ENCODE measurements at regions of chr12 and their contacts with region 1.

Region 1: DNA sequence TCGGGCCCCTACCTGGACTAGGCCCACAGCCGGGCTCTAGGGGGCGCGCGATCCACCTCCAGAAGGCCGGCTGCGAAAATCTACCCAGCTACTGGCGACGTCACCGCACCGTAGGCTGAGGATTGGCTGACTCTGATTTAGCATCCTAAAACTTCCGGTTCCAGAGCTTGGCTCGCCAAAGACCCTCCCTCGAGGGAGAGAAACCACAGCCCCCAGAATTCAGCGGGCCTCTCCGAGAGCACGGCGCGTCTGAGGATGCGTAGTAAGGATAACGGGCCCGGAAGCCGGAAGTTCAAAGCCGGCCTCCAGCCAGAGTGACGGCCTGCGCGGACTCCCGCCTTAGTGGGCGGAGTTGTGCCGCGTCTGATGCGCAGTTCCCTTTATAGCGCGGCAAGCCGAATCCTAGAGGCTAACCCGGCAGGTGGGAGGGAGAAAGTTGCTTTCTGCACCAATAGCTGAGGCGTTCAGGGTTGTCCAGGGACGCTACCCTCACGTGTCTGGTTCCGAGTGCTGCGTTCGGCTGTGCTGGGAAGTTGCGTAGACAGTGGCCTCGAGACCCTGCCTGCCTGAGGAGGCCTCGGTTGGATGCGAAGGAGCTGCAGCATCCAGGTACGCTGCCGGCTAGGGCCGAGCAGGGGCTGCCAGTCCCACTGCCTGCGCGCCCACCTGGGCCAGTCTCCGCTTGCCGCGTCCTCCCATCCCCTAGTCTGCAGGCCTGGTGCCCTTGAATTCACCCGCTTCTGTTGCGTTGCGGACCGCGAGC is at the start of gene COX14:
- DNase-seq: peak; percentile 100
- H3K4me3 Mint-ChIP-seq: peak within 1 kb of the TSS; percentile 95
- H3K27ac Mint-ChIP-seq: peak within 1 kb of the TSS; percentile 96
- H3K4me1 Mint-ChIP-seq: peaks cover 32% of the 10 kb centered on the region
- H3K27me3 Mint-ChIP-seq: no peaks in the 10 kb centered on the region
- total RNA-seq, gene COX14: 44.0 and 45.0 TPM in 2 replicates

Region 2: GRCh38 chr12:50025187-50026059 is 86.5 kb before region 1 on chr12 and contains the start of gene RACGAP1:
- intact Hi-C with region 1: loop called (anchors 1 kb)
- DNase-seq: peak; percentile 99
- H3K4me3 Mint-ChIP-seq: peak within 1 kb of the TSS; percentile 93
- H3K27ac Mint-ChIP-seq: peak within 1 kb of the TSS; percentile 96
- H3K4me1 Mint-ChIP-seq: peaks cover 37% of the 10 kb centered on the region
- H3K27me3 Mint-ChIP-seq: no peaks in the 10 kb centered on the region
- total RNA-seq, gene RACGAP1: 71.2 and 71.6 TPM in 2 replicates

Region 3: GRCh38 chr12:50084775-50085614 is 26.9 kb before region 1 on chr12 and contains the start of gene SMARCD1:
- intact Hi-C with region 1: loop called (anchors 1 kb)
- DNase-seq: peak; percentile 94
- H3K4me3 Mint-ChIP-seq: peak within 1 kb of the TSS; percentile 93
- H3K27ac Mint-ChIP-seq: peak within 1 kb of the TSS; percentile 95
- H3K4me1 Mint-ChIP-seq: peaks cover 30% of the 10 kb centered on the region
- H3K27me3 Mint-ChIP-seq: no peaks in the 10 kb centered on the region
- total RNA-seq, gene SMARCD1: 73.1 and 82.5 TPM in 2 replicates

Measured in activated CD4-positive, alpha-beta T cell treated with anti-CD3 and anti-CD28 coated beads, Interleukin-2, amount 10 ng/mL, durations not matched to agents 24 days and 14 days (primary cell).